ENCODE measurements at regions of chr3 and their contacts with region 1.

Region 1: DNA sequence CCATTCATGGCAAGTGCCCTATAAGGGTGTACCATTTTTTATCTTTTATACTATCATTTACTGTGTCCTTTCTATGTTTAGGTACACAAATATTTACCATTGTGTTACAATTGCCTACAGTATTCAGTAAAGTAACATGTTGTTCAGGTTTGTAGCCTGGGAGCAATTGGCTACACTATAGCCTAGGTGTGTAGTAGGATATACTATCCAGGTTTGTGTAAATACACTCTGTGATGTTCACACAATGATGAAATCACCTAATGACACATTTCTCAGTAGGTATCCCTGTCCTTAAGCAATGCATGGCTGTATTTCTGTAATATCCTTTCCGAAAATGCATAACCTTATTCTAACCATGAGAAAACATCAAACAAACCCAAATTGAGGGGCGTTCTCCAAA is 17.9 kb upstream of the CNOT10 start:
- DNase-seq: no peak
- H3K4me3 ChIP-seq: no peak overlapping the region
- H3K27ac ChIP-seq: no peak overlapping the region
- H3K4me1 ChIP-seq: no peaks in the 10 kb centered on the region
- H3K27me3 ChIP-seq: no peaks in the 10 kb centered on the region
- CTCF ChIP-seq: no peak
- EP300 ChIP-seq: no peak
- POLR2A ChIP-seq: no peak

Region 2: GRCh38 chr3:32374788-32375595 is 292.1 kb before region 1 on chr3:
- intact Hi-C with region 1: loop called in 1 of 4 experiments (anchors 10 kb)
- DNase-seq: peak in 2 of 5 donors; percentile 32 to 54
- H3K4me3 ChIP-seq: no peak overlapping the region
- H3K27ac ChIP-seq: no peak overlapping the region
- H3K4me1 ChIP-seq: no peaks in the 10 kb centered on the region
- H3K27me3 ChIP-seq: no peaks in the 10 kb centered on the region
- CTCF ChIP-seq: peak in 2 of 3 donors; percentile 47 to 57
- EP300 ChIP-seq: no peak
- POLR2A ChIP-seq: no peak

Region 3: GRCh38 chr3:32510075-32510724 is 156.9 kb before region 1 on chr3:
- intact Hi-C with region 1: loop called in 3 of 4 experiments (anchors 5 to 10 kb)
- DNase-seq: peak; percentile 50 to 73 (median 61)
- H3K4me3 ChIP-seq: no peak overlapping the region
- H3K27ac ChIP-seq: no peak overlapping the region
- H3K4me1 ChIP-seq: no peaks in the 10 kb centered on the region
- H3K27me3 ChIP-seq: no peaks in the 10 kb centered on the region
- CTCF ChIP-seq: peak; percentile 43 to 65 (median 62)
- EP300 ChIP-seq: no peak
- POLR2A ChIP-seq: no peak

Region 4: DNA sequence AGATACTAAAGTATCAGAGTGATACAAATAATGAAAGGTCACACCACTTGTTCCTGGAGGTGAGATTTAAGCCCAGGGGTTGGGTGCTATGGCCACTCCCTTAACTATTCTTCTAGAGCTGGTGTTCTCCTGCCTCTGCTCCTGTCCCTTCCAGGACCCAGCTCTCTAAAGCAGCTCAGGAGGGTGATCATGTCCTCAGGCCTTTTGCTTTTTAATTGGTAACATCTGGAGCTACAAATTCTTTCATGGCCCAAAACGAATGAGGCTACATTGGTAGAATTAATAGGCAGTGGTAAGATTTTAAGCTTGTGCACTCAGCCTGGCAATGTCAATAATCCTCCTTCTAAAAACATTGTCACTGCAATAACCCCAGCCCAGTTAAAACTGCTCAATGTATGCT is 20.4 kb before region 1 on chr3:
- intact Hi-C with region 1: no loop called
- DNase-seq: no peak
- H3K4me3 ChIP-seq: no peak overlapping the region
- H3K27ac ChIP-seq: no peak overlapping the region
- H3K4me1 ChIP-seq: no peaks in the 10 kb centered on the region
- H3K27me3 ChIP-seq: no peaks in the 10 kb centered on the region
- CTCF ChIP-seq: no peak
- EP300 ChIP-seq: no peak
- POLR2A ChIP-seq: no peak

Region 5: GRCh38 chr3:33521736-33522135 is 854.6 kb after region 1 on chr3:
- intact Hi-C with region 1: no loop called
- DNase-seq: no peak
- H3K4me3 ChIP-seq: no peak overlapping the region
- H3K27ac ChIP-seq: no peak overlapping the region
- H3K4me1 ChIP-seq: no peaks in the 10 kb centered on the region
- H3K27me3 ChIP-seq: no peaks in the 10 kb centered on the region
- CTCF ChIP-seq: no peak
- EP300 ChIP-seq: no peak
- POLR2A ChIP-seq: no peak

Measured in ovary (tissue), 10 donors.